ENCODE measurements at regions of chr11 and their contacts with region 1.

Region 1: GRCh38 chr11:123246749-123247495 is 51.9 kb upstream of the CLMP start:
- DNase-seq: peak; percentile 90
- ATAC-seq: peak; percentile 94
- H3K4me3 Mint-ChIP-seq: no peak overlapping the region
- H3K27ac Mint-ChIP-seq: no peak overlapping the region
- H3K4me1 Mint-ChIP-seq: peaks cover 7% of the 10 kb centered on the region
- H3K27me3 Mint-ChIP-seq: peaks cover 26% of the 10 kb centered on the region

Region 2: GRCh38 chr11:123054301-123055065 is 192.4 kb before region 1 on chr11:
- CTCF ChIA-PET with region 1: interaction called, 32 read pairs
- POLR2A ChIA-PET with region 1: interaction called, 4 read pairs
- DNase-seq: peak; percentile 52
- ATAC-seq: peak; percentile 45
- H3K4me3 Mint-ChIP-seq: no peak overlapping the region
- H3K27ac Mint-ChIP-seq: peak overlapping the region; percentile 61
- H3K4me1 Mint-ChIP-seq: peaks cover 43% of the 10 kb centered on the region
- H3K27me3 Mint-ChIP-seq: no peaks in the 10 kb centered on the region

Region 3: DNA sequence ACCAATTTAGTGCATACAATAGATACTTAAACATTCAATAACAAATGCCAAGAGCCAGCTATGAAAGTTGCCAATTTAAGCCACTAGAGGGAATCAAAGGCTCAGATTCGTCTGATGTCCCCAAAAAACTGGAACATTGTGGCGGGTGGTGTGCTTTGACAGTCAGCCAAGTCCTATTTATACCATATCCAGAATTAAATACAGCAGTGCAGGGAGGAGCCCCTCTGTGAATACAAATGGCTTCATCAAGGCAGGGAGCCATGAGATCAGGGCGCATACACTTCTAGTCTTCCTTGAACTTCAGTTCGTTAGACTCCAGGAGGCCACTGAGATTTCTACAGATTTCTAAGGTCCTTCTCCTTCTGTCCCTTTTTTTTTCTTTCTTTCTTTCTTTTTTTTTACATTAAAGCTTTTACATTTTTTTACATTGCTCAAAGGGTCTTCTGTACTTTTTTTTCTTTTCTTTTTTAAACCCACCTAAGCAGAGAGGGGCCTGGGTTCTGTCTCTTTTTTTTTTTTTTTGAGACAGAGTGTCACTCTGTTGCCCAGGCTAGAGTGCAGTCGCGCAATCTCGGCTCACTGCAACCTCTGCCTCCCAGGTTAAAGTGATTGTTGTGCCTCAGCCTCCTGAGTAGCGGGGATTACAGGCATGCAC is 143.5 kb before region 1 on chr11:
- CTCF ChIA-PET with region 1: interaction called, 279 read pairs
- POLR2A ChIA-PET with region 1: no interaction called
- DNase-seq: peak; percentile 51
- ATAC-seq: peak; percentile 80
- H3K4me3 Mint-ChIP-seq: no peak overlapping the region
- H3K27ac Mint-ChIP-seq: no peak overlapping the region
- H3K4me1 Mint-ChIP-seq: peaks cover 23% of the 10 kb centered on the region
- H3K27me3 Mint-ChIP-seq: peaks cover 6% of the 10 kb centered on the region

Region 4: DNA sequence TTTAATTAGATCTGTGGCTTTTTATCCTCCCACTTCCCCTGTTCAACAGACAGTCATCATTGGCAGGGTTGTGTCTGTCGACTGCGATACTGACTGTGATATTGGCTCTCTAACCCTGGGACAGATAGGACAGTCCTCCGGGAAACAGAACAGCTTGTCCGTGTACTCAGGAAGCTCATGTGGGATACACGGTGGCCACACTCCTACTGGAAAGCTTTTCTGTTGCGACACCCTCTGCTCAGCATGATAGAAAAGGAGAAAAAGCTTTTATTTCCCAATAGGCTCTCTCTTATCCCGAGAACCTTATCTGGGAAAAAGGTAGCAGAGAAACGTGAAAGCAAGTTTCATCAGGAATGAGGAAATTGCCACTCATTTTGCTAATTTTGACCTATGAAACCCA is 124.6 kb before region 1 on chr11:
- CTCF ChIA-PET with region 1: interaction called, 10 read pairs
- POLR2A ChIA-PET with region 1: no interaction called
- DNase-seq: no peak
- ATAC-seq: no peak
- H3K4me3 Mint-ChIP-seq: no peak overlapping the region
- H3K27ac Mint-ChIP-seq: no peak overlapping the region
- H3K4me1 Mint-ChIP-seq: peaks cover 4% of the 10 kb centered on the region
- H3K27me3 Mint-ChIP-seq: peaks cover 3% of the 10 kb centered on the region

Region 5: DNA sequence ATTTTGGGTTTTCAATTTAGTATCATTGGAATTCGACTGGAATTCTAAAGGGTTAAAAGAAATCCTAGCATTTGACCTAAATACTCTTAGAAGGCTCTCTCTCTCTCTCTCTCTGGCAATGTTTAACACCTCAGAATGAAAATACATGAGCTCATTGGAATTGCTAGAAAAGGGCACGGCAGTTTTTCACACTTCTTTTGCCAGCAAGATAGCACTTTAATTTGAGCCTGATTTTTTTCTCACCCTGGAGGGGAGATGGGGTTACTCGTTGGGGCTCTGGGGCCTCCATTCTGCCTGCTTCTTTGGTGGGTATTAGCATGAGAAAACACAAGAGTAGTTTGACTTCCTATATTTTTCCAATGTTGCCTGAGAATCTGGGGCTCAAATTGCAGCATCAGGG is 29.0 kb before region 1 on chr11:
- CTCF ChIA-PET with region 1: interaction called, 11 read pairs
- POLR2A ChIA-PET with region 1: no interaction called
- DNase-seq: no peak
- ATAC-seq: no peak
- H3K4me3 Mint-ChIP-seq: no peak overlapping the region
- H3K27ac Mint-ChIP-seq: no peak overlapping the region
- H3K4me1 Mint-ChIP-seq: no peaks in the 10 kb centered on the region
- H3K27me3 Mint-ChIP-seq: peaks cover 28% of the 10 kb centered on the region

Region 6: DNA sequence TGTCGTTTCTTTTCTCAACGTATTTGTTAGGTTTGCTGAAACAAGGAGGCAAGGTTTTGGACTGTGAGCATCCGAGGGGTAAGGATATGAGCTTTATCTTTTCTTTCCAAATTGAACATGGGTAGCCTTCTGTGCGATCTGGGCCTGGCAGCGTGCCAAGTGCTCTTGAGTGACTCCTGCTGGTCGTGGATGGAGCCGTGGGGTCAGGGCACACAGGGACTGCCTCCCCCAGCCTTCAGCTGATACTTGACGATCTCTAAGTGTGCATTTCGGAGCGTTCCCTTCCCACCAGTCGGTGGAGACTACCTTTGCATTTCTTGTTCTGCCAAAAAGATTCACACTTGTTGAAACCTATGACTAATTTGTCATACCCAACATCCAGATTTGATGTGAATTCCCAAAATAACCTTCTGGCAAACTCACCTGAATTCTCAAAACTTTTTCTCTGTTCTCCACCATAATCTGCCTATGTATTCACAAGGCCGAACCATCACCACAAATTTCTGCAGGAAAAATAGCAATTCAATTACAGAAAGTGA is 11.7 kb before region 1 on chr11:
- CTCF ChIA-PET with region 1: interaction called, 26 read pairs
- POLR2A ChIA-PET with region 1: no interaction called
- DNase-seq: peak; percentile 46
- ATAC-seq: no peak
- H3K4me3 Mint-ChIP-seq: no peak overlapping the region
- H3K27ac Mint-ChIP-seq: peak overlapping the region; percentile 14
- H3K4me1 Mint-ChIP-seq: peaks cover 32% of the 10 kb centered on the region
- H3K27me3 Mint-ChIP-seq: peaks cover 9% of the 10 kb centered on the region